GM10248 (cell line): ENCODE measurements at regions of chr1 and their contacts with region 1.

Region 1: GRCh38 chr1:241837901-241838300 is 10.1 kb upstream of the EXO1 start:
- DNase-seq: no peak
- CTCF ChIP-seq: no peak

Region 2: GRCh38 chr1:241825581-241825980 is 12.3 kb before region 1 on chr1:
- CTCF ChIA-PET with region 1: interaction called, 10 read pairs
- POLR2A ChIA-PET with region 1: no interaction called
- DNase-seq: no peak
- CTCF ChIP-seq: no peak

Region 3: GRCh38 chr1:241847796-241848685 is 10.1 kb after region 1 on chr1 and contains the start of gene EXO1:
- CTCF ChIA-PET with region 1: interaction called, 13 read pairs
- POLR2A ChIA-PET with region 1: no interaction called
- DNase-seq: peak; percentile 93
- CTCF ChIP-seq: peak; percentile 48

Region 4: DNA sequence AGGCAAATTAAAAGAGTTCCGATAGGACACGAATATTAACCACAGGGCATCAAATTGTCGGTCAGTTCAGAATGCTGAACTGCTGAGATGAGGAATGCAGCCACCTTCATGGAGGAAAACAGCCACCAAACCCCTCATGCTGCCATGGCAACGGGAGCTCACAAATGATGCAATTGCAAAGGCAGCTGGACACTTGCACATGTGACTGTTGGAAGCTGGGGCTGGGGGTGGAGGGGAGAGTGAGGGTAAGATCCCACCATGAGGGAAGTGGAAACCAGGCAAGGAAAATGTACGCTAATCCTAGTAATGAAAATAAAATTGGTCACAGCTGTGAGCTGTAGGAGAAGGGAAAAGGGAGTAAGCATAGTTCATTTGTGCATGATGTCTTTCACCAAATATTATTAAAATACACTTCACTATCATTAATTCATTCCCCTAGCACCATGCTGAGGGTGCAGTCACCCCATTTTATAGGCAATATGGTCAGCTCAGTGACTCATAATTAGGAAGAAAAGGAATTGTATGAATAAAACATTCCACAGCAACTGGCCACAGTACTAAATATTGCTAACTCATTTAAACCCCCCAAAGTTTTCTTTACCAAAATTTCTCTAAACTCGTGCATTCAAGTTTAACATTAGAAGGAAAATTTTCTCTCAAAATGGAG is 134.9 kb after region 1 on chr1:
- CTCF ChIA-PET with region 1: no interaction called
- POLR2A ChIA-PET with region 1: no interaction called
- DNase-seq: no peak
- CTCF ChIP-seq: no peak